ENCODE measurements at regions of chr6 and their contacts with region 1.

Region 1: DNA sequence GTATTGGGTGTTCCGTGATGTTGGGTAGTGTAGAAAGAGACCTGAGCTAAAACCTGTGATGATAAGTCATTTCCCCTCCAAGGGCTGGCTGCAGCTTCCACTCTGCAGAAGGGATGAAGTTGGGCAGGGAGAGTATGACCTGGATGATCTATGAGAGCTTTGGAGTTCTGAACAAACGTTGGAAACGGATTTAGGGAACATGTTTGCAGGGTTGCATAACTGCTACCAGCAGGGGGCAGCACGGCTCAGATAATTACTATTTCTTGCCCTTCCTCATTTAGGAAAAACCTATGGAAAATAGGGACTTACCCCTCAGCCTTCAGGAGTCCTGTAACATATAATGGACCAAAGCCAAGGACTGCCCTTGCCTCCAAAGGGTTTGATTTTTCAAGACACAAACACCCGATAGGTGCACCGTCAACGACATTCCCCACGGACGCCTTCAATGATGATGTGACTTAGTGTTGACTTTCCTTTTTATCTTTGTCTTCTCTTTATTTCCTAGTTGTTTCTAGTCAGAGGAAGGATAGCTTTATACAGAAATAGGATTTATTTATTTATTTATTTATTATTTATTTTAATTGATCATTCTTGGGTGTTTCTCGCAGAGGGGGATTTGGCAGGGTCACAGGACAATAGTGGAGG is 164.9 kb upstream of the SASH1 start:
- DNase-seq: peak; percentile 72
- H3K4me3 Mint-ChIP-seq: no peak overlapping the region
- H3K27ac Mint-ChIP-seq: no peak overlapping the region
- H3K4me1 Mint-ChIP-seq: no peaks in the 10 kb centered on the region
- H3K27me3 Mint-ChIP-seq: no peaks in the 10 kb centered on the region
- CTCF ChIP-seq: peak; percentile 76

Region 2: GRCh38 chr6:148192310-148192709 is 14.6 kb after region 1 on chr6:
- CTCF ChIA-PET with region 1: interaction called, 29 read pairs
- POLR2A ChIA-PET with region 1: interaction called, 23 read pairs
- intact Hi-C with region 1: no loop called
- DNase-seq: peak; percentile 52
- H3K4me3 Mint-ChIP-seq: peak overlapping the region; percentile 60
- H3K27ac Mint-ChIP-seq: peak overlapping the region; percentile 92
- H3K4me1 Mint-ChIP-seq: peaks cover 34% of the 10 kb centered on the region
- H3K27me3 Mint-ChIP-seq: no peaks in the 10 kb centered on the region
- CTCF ChIP-seq: no peak

Region 3: DNA sequence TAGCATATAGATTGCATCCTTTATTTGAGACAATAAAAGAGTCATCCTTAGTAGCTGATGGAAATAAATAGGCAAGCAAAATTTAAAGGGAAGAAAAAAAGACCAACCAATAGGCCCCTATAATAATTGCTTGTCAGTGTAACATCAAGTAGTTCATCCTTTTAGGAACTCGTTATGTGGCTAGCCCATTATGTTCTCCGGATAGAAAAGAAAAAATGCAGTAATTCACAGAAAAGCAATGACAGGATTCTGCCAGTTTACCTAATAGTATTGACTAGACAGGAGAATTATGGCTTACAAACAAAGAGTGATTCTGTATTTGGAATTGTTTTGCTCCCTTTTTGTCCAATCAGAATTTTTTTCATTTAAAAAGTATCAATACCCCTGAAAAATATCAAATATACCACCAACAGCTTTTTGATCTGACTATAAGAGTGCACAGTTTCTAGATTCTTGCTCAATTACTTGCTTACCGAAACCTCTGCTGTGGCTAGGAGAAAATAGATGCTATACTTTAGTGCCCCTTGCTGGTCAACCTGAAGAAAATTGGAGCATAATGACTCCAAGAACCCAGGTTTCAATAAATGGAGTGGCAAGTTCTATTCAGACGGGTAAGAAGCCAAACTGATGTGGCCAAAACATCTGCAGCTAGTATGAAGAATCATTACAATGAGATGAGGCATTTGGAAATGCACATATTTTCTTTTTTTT is 73.4 kb after region 1 on chr6:
- CTCF ChIA-PET with region 1: interaction called, 258 read pairs
- POLR2A ChIA-PET with region 1: interaction called, 22 read pairs
- intact Hi-C with region 1: loop called (anchors 1 kb)
- DNase-seq: peak; percentile 66
- H3K4me3 Mint-ChIP-seq: no peak overlapping the region
- H3K27ac Mint-ChIP-seq: no peak overlapping the region
- H3K4me1 Mint-ChIP-seq: peaks cover 6% of the 10 kb centered on the region
- H3K27me3 Mint-ChIP-seq: no peaks in the 10 kb centered on the region
- CTCF ChIP-seq: peak; percentile 63

Region 4: GRCh38 chr6:148342357-148343046 is 164.8 kb after region 1 on chr6 and contains the start of gene SASH1:
- CTCF ChIA-PET with region 1: no interaction called
- POLR2A ChIA-PET with region 1: interaction called, 4 read pairs
- intact Hi-C with region 1: loop called (anchors 5 kb)
- DNase-seq: peak; percentile 91
- H3K4me3 Mint-ChIP-seq: peak within 1 kb of the TSS; percentile 90
- H3K27ac Mint-ChIP-seq: peak within 1 kb of the TSS; percentile 99
- H3K4me1 Mint-ChIP-seq: peaks cover 34% of the 10 kb centered on the region
- H3K27me3 Mint-ChIP-seq: no peaks in the 10 kb centered on the region
- CTCF ChIP-seq: no peak
- total RNA-seq, gene SASH1: 16.7 and 18.4 TPM in 2 replicates

Region 5: DNA sequence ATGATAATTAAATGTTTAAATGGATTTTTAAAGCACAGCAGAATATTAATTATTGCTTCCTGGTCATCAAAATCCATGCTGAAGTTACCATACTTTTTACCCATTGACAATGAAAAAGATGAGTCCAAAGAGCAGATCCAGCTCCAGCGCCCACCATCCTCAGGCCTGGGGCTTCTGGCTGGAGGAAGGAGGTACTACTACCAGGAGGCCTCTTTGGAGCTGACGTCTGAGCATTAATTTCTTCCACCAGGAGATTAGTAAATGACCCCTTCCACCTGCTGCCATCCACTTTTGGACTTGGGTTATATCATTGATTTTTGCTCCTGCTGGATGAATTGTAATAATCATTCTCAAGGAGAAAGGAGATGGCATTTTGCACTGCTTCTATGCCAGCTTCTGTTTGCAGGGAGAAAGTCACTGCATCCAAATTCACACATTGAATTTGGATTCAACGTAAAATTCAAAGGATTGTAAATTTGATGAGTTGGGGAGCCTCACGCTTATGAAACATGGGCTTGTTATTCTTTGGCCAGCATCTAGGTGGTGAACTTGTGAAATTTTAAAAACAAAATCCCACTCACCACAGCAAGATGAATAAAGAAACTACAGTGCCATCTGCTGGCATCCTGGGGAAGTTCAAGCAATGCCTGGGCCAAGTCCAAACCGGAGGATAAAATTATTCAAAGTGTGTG is 286.8 kb after region 1 on chr6:
- CTCF ChIA-PET with region 1: interaction called, 28 read pairs
- POLR2A ChIA-PET with region 1: interaction called, 4 read pairs
- intact Hi-C with region 1: loop called (anchors 1 kb)
- DNase-seq: peak; percentile 73
- H3K4me3 Mint-ChIP-seq: no peak overlapping the region
- H3K27ac Mint-ChIP-seq: peak overlapping the region; percentile 57
- H3K4me1 Mint-ChIP-seq: peaks cover 27% of the 10 kb centered on the region
- H3K27me3 Mint-ChIP-seq: no peaks in the 10 kb centered on the region
- CTCF ChIP-seq: peak; percentile 96